ENCODE measurements at regions of chr3 and their contacts with region 1.

Region 1: GRCh38 chr3:11221818-11222415 is 50.3 kb upstream of the ATG7 start:
- DNase-seq: no peak
- H3K4me3 ChIP-seq: no peak overlapping the region
- H3K27ac ChIP-seq: no peak overlapping the region
- H3K4me1 ChIP-seq: peaks cover 12% of the 10 kb centered on the region
- H3K27me3 ChIP-seq: no peaks in the 10 kb centered on the region
- CTCF ChIP-seq: peak; percentile 28; the same call in 1 of the 2 replicates

Region 2: GRCh38 chr3:10581251-10581650 is 640.7 kb before region 1 on chr3:
- CTCF ChIA-PET with region 1: no interaction called
- POLR2A ChIA-PET with region 1: no interaction called
- intact Hi-C with region 1: no loop called
- DNase-seq: no peak
- H3K4me3 ChIP-seq: no peak overlapping the region
- H3K27ac ChIP-seq: no peak overlapping the region
- H3K4me1 ChIP-seq: no peaks in the 10 kb centered on the region
- H3K27me3 ChIP-seq: peaks cover 25% of the 10 kb centered on the region
- CTCF ChIP-seq: no peak

Region 3: DNA sequence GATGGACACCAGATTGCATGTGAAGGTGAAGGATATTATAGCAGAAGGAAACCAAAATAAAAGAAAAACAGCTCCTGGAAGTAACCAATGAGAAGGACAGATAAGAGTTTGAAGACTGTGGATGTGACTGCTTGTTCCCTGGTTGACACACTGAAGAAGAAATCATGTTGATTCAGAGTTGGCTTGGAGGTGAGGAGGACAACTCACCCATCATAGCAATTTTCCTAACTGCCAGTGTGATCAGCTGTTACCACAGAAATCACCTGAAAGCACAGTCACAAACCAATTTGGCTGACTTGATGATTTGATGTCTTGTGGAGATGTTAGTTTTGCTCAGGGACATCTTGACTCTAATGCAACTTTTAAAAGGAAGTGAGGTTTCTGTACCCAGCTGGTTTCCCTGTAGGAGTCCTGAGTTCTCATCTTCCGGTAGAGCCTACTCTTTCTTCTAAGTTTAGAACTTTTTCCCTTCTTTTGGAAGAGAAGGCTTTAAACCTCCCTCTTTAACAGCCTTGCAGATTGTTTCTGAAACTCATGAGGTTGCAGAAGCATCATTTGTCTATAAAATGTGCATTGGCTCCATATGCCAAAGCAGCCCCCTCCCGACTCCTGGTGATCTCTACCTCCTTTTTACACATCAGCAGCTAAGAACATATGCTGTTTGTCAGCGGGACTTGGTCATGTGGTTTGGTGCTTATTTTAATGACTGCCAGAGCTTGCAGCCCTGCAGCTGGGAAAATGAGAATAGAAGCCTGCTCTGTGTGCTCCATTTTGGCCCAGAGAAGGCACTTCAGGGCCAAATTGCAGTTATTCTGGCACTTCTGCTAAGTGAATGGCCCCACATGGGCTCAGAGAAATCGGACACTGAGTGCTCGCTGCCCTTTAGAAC is 60.6 kb after region 1 on chr3:
- CTCF ChIA-PET with region 1: no interaction called
- POLR2A ChIA-PET with region 1: interaction called, 10 read pairs
- intact Hi-C with region 1: no loop called
- DNase-seq: peak; percentile 87
- H3K4me3 ChIP-seq: no peak overlapping the region
- H3K27ac ChIP-seq: peak overlapping the region; percentile 93
- H3K4me1 ChIP-seq: peaks cover 50% of the 10 kb centered on the region
- H3K27me3 ChIP-seq: no peaks in the 10 kb centered on the region
- CTCF ChIP-seq: no peak